Panc1 (cell line): ENCODE measurements at regions of chr9 and their contacts with region 1.

Region 1: DNA sequence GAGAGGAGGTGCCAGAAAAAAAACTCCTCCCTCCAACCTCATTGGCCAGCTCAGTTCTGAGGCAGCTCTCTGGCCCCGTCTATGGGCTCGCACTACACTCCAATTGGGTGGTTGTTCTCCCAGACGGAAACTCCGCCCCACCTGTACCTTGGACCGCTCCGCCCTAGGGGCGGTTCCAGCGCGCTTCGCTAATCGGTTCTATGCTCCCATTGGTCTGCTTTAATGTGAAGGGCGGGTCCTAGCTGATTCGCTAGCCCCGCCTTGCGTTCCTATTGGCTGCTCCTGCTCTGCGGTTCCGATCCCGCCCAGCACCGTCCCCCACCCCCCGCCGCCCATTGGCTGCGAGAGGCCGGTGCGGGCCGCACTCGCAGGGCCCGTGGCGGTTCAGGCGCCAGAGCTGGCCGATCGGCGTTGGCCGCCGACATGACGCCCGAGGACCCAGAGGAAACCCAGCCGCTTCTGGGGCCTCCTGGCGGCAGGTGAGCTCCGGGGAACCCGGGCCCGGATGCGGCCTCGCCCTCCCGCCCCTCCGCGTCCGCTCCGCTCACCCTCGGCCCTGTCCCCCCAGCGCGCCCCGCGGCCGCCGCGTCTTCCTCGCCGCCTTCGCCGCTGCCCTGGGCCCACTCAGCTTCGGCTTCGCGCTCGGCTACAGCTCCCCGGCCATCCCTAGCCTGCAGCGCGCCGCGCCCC is at the start of gene SLC2A8:
- DNase-seq: peak; percentile 98
- ATAC-seq: peak; percentile 96
- H3K4me3 ChIP-seq: peak within 1 kb of the TSS; percentile 64 to 76
- H3K27ac ChIP-seq: peak within 1 kb of the TSS; percentile 86
- H3K4me1 ChIP-seq: peaks cover 16% of the 10 kb centered on the region
- H3K27me3 ChIP-seq: no peaks in the 10 kb centered on the region
- CTCF ChIP-seq: no peak
- total RNA-seq, gene SLC2A8: 55.7 TPM

Region 2: GRCh38 chr9:127406799-127407509 is 10.0 kb after region 1 on chr9:
- CTCF ChIA-PET with region 1: no interaction called
- POLR2A ChIA-PET with region 1: interaction called, 12 read pairs
- in situ Hi-C with region 1: no loop called
- intact Hi-C with region 1: no loop called
- DNase-seq: no peak
- ATAC-seq: peak; percentile 32
- H3K4me3 ChIP-seq: no peak overlapping the region
- H3K27ac ChIP-seq: 0 out of 2 replicates have a peak overlapping the region, but pooled peaks have one; percentile 34
- H3K4me1 ChIP-seq: peaks cover 15% of the 10 kb centered on the region
- H3K27me3 ChIP-seq: no peaks in the 10 kb centered on the region
- CTCF ChIP-seq: no peak

Region 3: DNA sequence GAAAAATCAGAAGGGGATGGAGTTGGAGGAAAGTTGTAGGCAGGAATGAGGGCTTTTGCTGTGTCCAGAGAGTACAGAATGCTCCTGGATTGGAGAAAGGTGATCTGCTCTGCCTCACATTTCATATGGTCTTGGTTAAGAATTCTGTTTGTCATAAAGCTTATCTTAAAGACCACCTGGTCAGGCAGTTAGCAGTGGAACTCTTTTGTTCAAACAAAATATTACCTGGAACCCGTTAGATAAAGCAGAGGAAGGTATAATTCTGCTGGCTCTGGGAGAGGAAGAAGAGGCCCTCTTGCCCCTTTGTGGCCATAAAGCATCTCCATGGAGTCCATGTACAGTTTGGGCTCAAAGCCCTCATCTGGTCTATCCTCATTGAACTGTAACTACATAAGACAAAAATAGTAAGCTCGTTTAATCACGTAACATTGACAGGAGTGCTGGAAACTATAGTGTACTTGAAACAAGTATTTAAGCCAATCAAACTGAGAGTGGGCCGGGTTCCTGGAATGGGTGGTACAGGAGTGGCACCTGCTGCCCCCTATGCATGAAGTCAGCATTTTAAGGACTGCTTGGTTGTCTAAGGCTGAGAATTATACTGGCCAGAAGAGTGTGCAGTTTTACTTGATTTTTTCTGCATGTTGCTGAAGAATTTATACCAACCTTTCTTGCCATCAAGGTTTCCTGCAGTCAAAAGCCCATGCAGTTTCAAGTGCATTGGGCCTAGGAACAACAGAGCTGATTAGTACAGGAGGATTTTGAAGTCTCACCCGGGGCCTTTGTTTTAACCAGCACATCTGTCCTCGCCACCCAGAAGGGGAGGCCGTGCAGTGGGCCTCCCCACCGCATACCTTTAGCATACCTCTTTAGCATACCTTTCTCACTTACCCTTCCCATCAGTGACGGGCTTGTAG is 255.0 kb after region 1 on chr9:
- CTCF ChIA-PET with region 1: no interaction called
- POLR2A ChIA-PET with region 1: no interaction called
- in situ Hi-C with region 1: no loop called
- intact Hi-C with region 1: no loop called
- DNase-seq: no peak
- ATAC-seq: no peak
- H3K4me3 ChIP-seq: no peak overlapping the region
- H3K27ac ChIP-seq: no peak overlapping the region
- H3K4me1 ChIP-seq: no peaks in the 10 kb centered on the region
- H3K27me3 ChIP-seq: no peaks in the 10 kb centered on the region
- CTCF ChIP-seq: no peak